ENCODE measurements at regions of chr5 and their contacts with region 1.

Region 1: DNA sequence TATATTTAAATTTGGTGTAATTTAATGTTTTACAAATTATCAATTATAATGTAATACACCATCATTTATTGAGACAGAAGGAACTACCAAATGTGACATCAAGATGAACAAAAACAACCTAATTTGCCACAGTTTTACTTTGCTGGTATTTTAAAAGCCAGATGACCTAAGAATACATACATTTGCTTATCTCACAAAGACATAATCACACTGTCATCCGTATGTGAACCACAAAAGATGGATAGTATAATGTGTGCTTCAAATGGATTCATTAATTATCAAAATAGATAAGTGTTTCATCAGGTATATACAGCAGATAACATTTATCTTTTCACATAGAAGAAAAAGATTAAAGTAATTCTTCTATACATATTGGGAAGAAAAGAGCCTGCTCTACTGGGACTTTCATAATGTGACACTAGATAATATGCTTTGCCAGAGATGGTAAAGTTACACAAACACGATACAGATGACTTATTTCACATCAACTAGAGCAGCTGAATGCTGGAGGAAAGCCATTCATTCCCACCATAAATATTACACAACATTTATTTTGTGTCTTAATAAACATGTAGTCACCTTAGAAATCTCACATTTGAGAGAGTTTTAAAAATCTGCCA is 278.5 kb downstream of the ISL1 start:
- DNase-seq: no peak
- H3K27ac ChIP-seq: no peak overlapping the region
- CTCF ChIP-seq: no peak

Region 2: DNA sequence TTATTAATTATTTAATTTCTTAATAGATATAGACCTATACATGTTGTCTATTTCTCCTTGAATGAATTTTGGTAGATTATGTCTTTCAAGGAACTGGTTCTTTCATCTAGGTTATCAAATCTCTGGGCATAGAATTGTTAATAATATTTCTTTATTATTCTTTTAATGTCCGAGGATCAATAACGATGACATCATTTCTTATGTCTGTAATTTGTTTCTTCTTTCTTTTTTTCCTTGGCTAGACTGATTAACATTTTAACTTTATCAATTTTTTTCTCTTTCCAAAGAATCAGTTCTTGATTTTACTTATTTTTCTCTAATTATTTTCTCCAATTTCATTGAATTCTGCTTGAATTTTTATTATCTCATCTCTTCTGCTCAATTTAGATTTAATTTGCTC is 122.5 kb before region 1 on chr5:
- CTCF ChIA-PET with region 1: no interaction called
- POLR2A ChIA-PET with region 1: no interaction called
- DNase-seq: no peak
- H3K27ac ChIP-seq: no peak overlapping the region
- CTCF ChIP-seq: no peak

Region 3: DNA sequence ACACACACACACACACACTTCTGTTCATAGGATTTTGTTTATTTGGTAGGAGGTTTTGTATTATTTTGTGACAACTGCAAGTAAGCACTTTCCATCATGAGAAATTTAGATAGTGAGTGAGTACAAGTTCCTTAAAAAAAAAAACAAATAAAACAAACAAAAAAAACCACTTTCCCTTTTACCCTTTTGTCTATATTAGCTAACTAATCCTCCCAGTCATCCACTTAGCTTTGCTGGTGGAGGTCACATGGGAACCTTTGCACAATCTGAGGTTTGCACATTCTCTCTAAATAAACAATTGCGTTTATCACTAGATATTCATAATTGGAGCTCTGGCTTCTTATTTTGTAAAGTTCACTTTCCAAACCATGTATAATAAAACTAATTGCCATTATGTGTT is 1132.8 kb after region 1 on chr5:
- CTCF ChIA-PET with region 1: interaction called, 10 read pairs
- POLR2A ChIA-PET with region 1: no interaction called
- DNase-seq: no peak
- H3K27ac ChIP-seq: no peak overlapping the region
- CTCF ChIP-seq: no peak